ENCODE measurements at regions of chr6 and their contacts with region 1.

Region 1: DNA sequence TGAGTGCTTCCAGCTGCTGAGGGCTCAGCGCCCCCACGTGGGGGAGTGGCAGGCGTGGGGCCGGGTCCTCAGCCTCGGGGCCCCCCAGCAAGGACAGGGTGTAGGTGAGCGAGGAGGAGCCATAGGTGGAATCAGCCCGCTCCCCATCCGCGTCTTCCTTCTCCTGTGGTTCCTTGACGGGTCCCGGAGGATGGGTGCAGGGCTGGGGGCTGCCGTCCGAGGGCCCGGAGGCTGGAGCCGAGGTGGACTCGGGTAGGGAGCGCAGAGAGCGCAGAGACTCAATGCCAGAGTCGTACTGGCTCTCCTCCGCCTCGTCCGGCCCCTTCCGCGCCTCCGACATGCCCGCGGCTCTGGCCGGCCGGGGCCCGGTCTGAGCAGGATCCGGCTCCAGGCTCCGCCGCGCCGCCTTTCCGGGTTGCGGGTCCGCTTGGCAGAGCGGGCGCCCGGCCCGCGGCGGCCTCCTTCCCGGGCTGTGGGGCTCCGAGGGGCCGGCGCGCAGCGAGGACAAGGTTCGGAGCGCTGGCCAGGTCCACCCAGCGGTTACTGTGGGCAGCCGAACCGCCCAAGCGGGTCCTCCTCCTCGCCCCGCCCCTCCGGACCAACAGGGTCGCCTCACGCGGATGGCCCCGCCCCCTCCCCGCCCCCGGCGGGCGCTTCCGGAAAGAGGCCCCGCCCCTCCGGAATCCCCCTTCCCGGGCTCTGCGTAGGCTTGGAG is at the start of gene NFKBIE:
- DNase-seq: peak; percentile 96 to 99 (median 98)
- ATAC-seq: peak; percentile 88
- H3K4me3 ChIP-seq: peak within 1 kb of the TSS; percentile 30
- H3K4me1 ChIP-seq: peaks cover 17% of the 10 kb centered on the region
- CTCF ChIP-seq: no peak
- total RNA-seq, gene NFKBIE: 8.7 to 13.4 (median 10.8) TPM

Region 2: GRCh38 chr6:44128020-44128917 is 136.9 kb before region 1 on chr6:
- intact Hi-C with region 1: no loop called
- DNase-seq: peak; percentile 64 to 74 (median 71)
- ATAC-seq: peak; percentile 35
- H3K4me3 ChIP-seq: peak overlapping the region; percentile 85
- H3K4me1 ChIP-seq: peaks cover 53% of the 10 kb centered on the region
- CTCF ChIP-seq: no peak

Region 3: GRCh38 chr6:44338228-44339122 is 73.3 kb after region 1 on chr6:
- intact Hi-C with region 1: loop called (anchors 5 kb)
- DNase-seq: peak in 2 of 3 donors; percentile 73 to 84
- ATAC-seq: peak; percentile 92
- H3K4me3 ChIP-seq: no peak overlapping the region
- H3K4me1 ChIP-seq: no peaks in the 10 kb centered on the region
- CTCF ChIP-seq: peak; percentile 37